IMR-90 (cell line): ENCODE measurements at regions of chr18 and their contacts with region 1.

Region 1: DNA sequence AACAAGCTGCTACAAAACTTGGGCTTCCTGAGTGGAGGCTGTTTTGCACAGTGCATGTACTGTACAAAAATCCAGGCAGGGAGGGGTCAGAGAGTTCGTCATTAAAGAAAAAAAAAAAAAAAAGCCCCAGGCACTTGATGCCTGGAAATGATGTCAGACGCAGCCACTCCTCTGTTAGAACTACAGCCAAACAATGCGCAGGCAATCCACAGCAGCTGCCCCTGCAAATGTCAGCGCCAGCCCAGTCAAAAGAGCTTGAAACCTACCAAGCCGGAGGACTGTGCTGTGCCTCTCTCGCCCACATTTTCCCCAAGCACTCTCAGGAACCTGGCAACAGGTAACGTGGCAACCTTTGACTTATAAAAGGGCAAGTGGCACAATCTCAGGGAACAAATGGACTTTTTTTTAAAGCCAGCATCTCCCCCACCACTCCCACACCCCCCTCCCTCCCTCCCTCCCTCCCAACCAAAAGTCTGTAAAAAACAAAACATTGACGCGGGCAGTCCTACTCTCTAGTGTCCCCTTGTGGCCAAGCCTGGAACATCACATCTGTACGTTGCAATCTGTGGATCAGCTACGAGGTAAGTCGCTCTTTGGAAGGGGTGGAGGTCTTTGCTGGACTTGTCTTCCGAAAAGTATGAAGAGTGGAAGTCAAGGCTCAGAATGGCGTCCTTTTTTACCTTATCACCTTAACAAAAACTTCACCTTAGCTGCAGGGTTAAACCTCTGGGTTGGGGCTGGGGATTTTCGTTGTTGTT is 144.1 kb downstream of the TGIF1 start:
- DNase-seq: peak; percentile 98
- ATAC-seq: peak; percentile 79
- H3K4me3 ChIP-seq: peak overlapping the region; percentile 57
- H3K27ac ChIP-seq: peak overlapping the region; percentile 96
- H3K4me1 ChIP-seq: peaks cover 29% of the 10 kb centered on the region
- H3K27me3 ChIP-seq: no peaks in the 10 kb centered on the region
- CTCF ChIP-seq: peak; percentile 83
- POLR2A ChIP-seq: peak; percentile 90
- RAD21 ChIP-seq: peak; percentile 65

Region 2: GRCh38 chr18:3454365-3455089 is 139.6 kb before region 1 on chr18:
- CTCF ChIA-PET with region 1: interaction called, 33 read pairs
- POLR2A ChIA-PET with region 1: interaction called, 22 read pairs
- dilution Hi-C with region 1: no loop called
- in situ Hi-C with region 1: loop called (anchors 5 kb)
- intact Hi-C with region 1: loop called (anchors 1 kb)
- DNase-seq: peak; percentile 72
- ATAC-seq: no peak
- H3K4me3 ChIP-seq: peak overlapping the region; percentile 85
- H3K27ac ChIP-seq: peak overlapping the region; percentile 30; the same call in 1 of the 2 replicates
- H3K4me1 ChIP-seq: peaks cover 16% of the 10 kb centered on the region
- H3K27me3 ChIP-seq: no peaks in the 10 kb centered on the region
- CTCF ChIP-seq: peak; percentile 60
- POLR2A ChIP-seq: no peak
- RAD21 ChIP-seq: peak; percentile 40; the same call in 1 of the 2 replicates

Region 3: GRCh38 chr18:3652380-3653262 is 58.5 kb after region 1 on chr18:
- CTCF ChIA-PET with region 1: interaction called, 4 read pairs
- POLR2A ChIA-PET with region 1: interaction called, 3 read pairs
- dilution Hi-C with region 1: no loop called
- in situ Hi-C with region 1: no loop called
- intact Hi-C with region 1: loop called (anchors 2 kb)
- DNase-seq: peak; percentile 99
- ATAC-seq: peak; percentile 82
- H3K4me3 ChIP-seq: no peak overlapping the region
- H3K27ac ChIP-seq: peak overlapping the region; percentile 94
- H3K4me1 ChIP-seq: peaks cover 27% of the 10 kb centered on the region
- H3K27me3 ChIP-seq: no peaks in the 10 kb centered on the region
- CTCF ChIP-seq: peak; percentile 21; the same call in 1 of the 2 replicates
- POLR2A ChIP-seq: peak; percentile 94
- RAD21 ChIP-seq: peak; percentile 29; the same call in 1 of the 2 replicates

Region 4: GRCh38 chr18:3665780-3666525 is 71.9 kb after region 1 on chr18:
- CTCF ChIA-PET with region 1: interaction called, 28 read pairs
- POLR2A ChIA-PET with region 1: interaction called, 4 read pairs
- dilution Hi-C with region 1: no loop called
- in situ Hi-C with region 1: loop called (anchors 10 kb)
- intact Hi-C with region 1: loop called (anchors 1 kb)
- DNase-seq: peak; percentile 91
- ATAC-seq: peak; percentile 96
- H3K4me3 ChIP-seq: no peak overlapping the region
- H3K27ac ChIP-seq: peak overlapping the region; percentile 72
- H3K4me1 ChIP-seq: peaks cover 7% of the 10 kb centered on the region
- H3K27me3 ChIP-seq: no peaks in the 10 kb centered on the region
- CTCF ChIP-seq: peak; percentile 94
- POLR2A ChIP-seq: no peak
- RAD21 ChIP-seq: peak; percentile 99

Region 5: GRCh38 chr18:3758531-3758930 is 164.4 kb after region 1 on chr18:
- CTCF ChIA-PET with region 1: no interaction called
- POLR2A ChIA-PET with region 1: no interaction called
- dilution Hi-C with region 1: no loop called
- in situ Hi-C with region 1: no loop called
- intact Hi-C with region 1: loop called (anchors 2 kb)
- DNase-seq: peak; percentile 77
- ATAC-seq: no peak
- H3K4me3 ChIP-seq: no peak overlapping the region
- H3K27ac ChIP-seq: no peak overlapping the region
- H3K4me1 ChIP-seq: no peaks in the 10 kb centered on the region
- H3K27me3 ChIP-seq: no peaks in the 10 kb centered on the region
- CTCF ChIP-seq: no peak
- POLR2A ChIP-seq: no peak
- RAD21 ChIP-seq: no peak

Region 6: GRCh38 chr18:3869848-3870247 is 275.8 kb after region 1 on chr18:
- CTCF ChIA-PET with region 1: no interaction called
- POLR2A ChIA-PET with region 1: no interaction called
- dilution Hi-C with region 1: no loop called
- in situ Hi-C with region 1: no loop called
- intact Hi-C with region 1: loop called (anchors 5 kb)
- DNase-seq: peak; percentile 76
- ATAC-seq: peak; percentile 87
- H3K4me3 ChIP-seq: no peak overlapping the region
- H3K27ac ChIP-seq: no peak overlapping the region
- H3K4me1 ChIP-seq: no peaks in the 10 kb centered on the region
- H3K27me3 ChIP-seq: peaks cover 3% of the 10 kb centered on the region; the same call in 1 of the 2 replicates
- CTCF ChIP-seq: peak; percentile 71
- POLR2A ChIP-seq: no peak
- RAD21 ChIP-seq: peak; percentile 83

Region 7: GRCh38 chr18:3995476-3996102 is 401.5 kb after region 1 on chr18:
- CTCF ChIA-PET with region 1: no interaction called
- POLR2A ChIA-PET with region 1: no interaction called
- dilution Hi-C with region 1: no loop called
- in situ Hi-C with region 1: no loop called
- intact Hi-C with region 1: loop called (anchors 5 kb)
- DNase-seq: peak; percentile 82
- ATAC-seq: peak; percentile 72
- H3K4me3 ChIP-seq: no peak overlapping the region
- H3K27ac ChIP-seq: no peak overlapping the region
- H3K4me1 ChIP-seq: no peaks in the 10 kb centered on the region
- H3K27me3 ChIP-seq: no peaks in the 10 kb centered on the region
- CTCF ChIP-seq: peak; percentile 80
- POLR2A ChIP-seq: no peak
- RAD21 ChIP-seq: peak; percentile 76